SK-N-SH (cell line): ENCODE measurements at regions of chr12 and their contacts with region 1.

Region 1: GRCh38 chr12:117367011-117367638 is 5.7 kb upstream of the NOS1 start:
- DNase-seq: peak; percentile 76
- H3K4me3 ChIP-seq: peak overlapping the region in 1 of 2 experiments; percentile 7; a peak in 1 of 4 replicates
- H3K27ac ChIP-seq: peak overlapping the region in 1 of 2 experiments; percentile 65; a peak in 2 of 4 replicates
- H3K4me1 ChIP-seq: peaks cover 0 to 53% of the 10 kb centered on the region in 2 experiments; a peak in 2 of 4 replicates
- H3K27me3 ChIP-seq: peaks cover 10% of the 10 kb centered on the region; the same call in 1 of the 2 replicates
- CTCF ChIP-seq: peak; percentile 92
- EP300 ChIP-seq: no peak
- RAD21 ChIP-seq: peak; percentile 96

Region 2: GRCh38 chr12:117377744-117378143 is 10.6 kb after region 1 on chr12:
- CTCF ChIA-PET with region 1: interaction called, 34 read pairs
- POLR2A ChIA-PET with region 1: no interaction called
- DNase-seq: no peak
- H3K4me3 ChIP-seq: no peak overlapping the region
- H3K27ac ChIP-seq: no peak overlapping the region
- H3K4me1 ChIP-seq: peaks cover 0 to 11% of the 10 kb centered on the region in 2 experiments; a peak in 1 of 4 replicates
- H3K27me3 ChIP-seq: no peaks in the 10 kb centered on the region
- CTCF ChIP-seq: no peak
- EP300 ChIP-seq: no peak
- RAD21 ChIP-seq: no peak

Region 3: DNA sequence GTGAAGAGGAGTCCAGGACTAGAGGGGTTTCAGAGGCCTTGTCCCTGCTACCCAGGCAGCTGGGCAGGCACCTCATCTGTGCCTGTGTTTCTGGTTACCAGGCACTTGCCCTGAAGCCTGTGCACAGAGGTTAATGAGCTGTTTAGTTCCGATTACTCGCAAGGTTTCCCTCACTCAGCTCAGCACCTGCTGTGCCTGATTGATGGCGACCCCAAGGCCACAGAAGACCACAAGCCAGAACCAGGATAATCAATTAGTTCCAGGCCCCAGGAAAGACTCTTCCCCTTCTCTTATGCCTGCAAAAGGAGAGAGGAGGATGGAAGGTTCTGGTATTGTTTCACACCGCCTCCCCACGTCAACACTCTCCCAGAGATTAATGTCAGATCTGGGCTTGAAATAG is 83.1 kb after region 1 on chr12:
- CTCF ChIA-PET with region 1: interaction called, 14 read pairs
- POLR2A ChIA-PET with region 1: interaction called, 3 read pairs
- DNase-seq: peak; percentile 37
- H3K4me3 ChIP-seq: no peak overlapping the region
- H3K27ac ChIP-seq: peak overlapping the region in 1 of 2 experiments; percentile 56; a peak in 2 of 4 replicates
- H3K4me1 ChIP-seq: peaks cover 0 to 37% of the 10 kb centered on the region in 2 experiments; a peak in 1 of 4 replicates
- H3K27me3 ChIP-seq: no peaks in the 10 kb centered on the region
- CTCF ChIP-seq: no peak
- EP300 ChIP-seq: peak in 1 of 2 experiments; percentile 84; a peak in 1 of 4 replicates
- RAD21 ChIP-seq: no peak

Region 4: DNA sequence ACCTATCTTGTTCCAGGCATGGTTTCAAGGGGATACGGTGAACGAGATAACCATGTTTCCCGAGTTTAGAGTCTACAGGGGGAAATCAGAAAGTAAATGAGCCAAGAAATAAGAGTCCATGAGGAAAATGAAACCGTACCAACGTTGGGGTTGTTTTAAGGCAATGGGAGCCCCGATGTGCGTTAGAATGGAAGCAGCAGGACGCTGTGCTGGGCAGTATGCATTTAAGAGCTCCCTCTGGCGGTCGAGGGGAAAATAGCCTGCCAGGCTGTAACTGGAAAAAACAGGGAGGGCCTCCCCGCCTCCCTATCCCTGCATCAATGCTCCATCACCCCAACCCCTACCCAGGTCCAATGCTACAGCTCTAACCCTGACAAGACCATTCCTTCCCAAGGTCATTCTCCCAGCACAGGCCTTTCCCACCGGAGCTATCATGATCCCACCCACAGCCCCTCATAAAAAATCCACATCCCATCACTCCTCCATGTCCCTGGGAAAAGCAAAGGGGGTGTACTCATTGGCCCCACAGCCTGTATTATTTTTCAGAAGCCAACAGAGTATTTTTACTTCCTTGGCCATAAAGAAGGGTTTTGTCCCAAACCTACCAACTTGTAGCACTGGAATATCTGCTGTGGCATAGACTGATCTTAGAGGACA is 220.6 kb after region 1 on chr12:
- CTCF ChIA-PET with region 1: interaction called, 90 read pairs
- POLR2A ChIA-PET with region 1: no interaction called
- DNase-seq: peak; percentile 61
- H3K4me3 ChIP-seq: no peak overlapping the region
- H3K27ac ChIP-seq: no peak overlapping the region; a peak in 1 of 4 replicates
- H3K4me1 ChIP-seq: peaks cover 0 to 7% of the 10 kb centered on the region in 2 experiments; a peak in 1 of 4 replicates
- H3K27me3 ChIP-seq: no peaks in the 10 kb centered on the region
- CTCF ChIP-seq: peak; percentile 70
- EP300 ChIP-seq: no peak
- RAD21 ChIP-seq: peak; percentile 75

Region 5: GRCh38 chr12:117850048-117850447 is 482.9 kb after region 1 on chr12:
- CTCF ChIA-PET with region 1: interaction called, 42 read pairs
- POLR2A ChIA-PET with region 1: no interaction called
- DNase-seq: peak; percentile 81
- H3K4me3 ChIP-seq: no peak overlapping the region; a peak in 1 of 4 replicates
- H3K27ac ChIP-seq: no peak overlapping the region
- H3K4me1 ChIP-seq: no peaks in the 10 kb centered on the region
- H3K27me3 ChIP-seq: no peaks in the 10 kb centered on the region
- CTCF ChIP-seq: peak; percentile 81
- EP300 ChIP-seq: no peak
- RAD21 ChIP-seq: peak; percentile 79